Activated CD8-positive, alpha-beta T cell treated with anti-CD3 and anti-CD28 coated beads, Interleukin-2, amount 10 ng/mL, durations not matched to agents 7 days and 5 days (primary cell): ENCODE measurements at regions of chr1 and their contacts with region 1.

Region 1: DNA sequence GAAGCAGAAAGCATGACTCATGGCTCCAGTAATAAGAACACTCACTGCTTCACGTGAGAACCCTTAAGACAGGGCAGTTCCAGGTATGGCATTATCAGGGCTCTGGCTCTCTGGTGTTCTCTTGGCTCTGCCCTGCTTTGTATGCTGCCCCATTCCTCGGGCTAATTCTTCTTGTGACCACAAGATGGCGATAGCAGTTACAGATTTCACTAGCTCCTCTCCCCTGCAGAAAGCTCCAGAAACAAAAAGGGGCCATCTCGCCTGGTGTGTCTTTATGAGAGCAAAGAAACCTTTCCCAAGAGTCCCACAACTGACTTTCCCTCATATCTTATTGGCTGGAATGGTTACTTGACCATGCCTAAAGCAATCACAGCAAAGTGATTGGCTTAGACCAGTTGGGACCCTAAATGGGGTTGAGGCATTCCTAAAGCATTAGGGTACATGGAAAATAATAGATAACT is 60.1 kb downstream of the F3 start:
- DNase-seq: peak; percentile 48
- ATAC-seq: peak; percentile 88
- H3K4me3 Mint-ChIP-seq: no peak overlapping the region
- H3K27ac Mint-ChIP-seq: no peak overlapping the region
- H3K4me1 Mint-ChIP-seq: no peaks in the 10 kb centered on the region
- H3K27me3 Mint-ChIP-seq: no peaks in the 10 kb centered on the region

Region 2: DNA sequence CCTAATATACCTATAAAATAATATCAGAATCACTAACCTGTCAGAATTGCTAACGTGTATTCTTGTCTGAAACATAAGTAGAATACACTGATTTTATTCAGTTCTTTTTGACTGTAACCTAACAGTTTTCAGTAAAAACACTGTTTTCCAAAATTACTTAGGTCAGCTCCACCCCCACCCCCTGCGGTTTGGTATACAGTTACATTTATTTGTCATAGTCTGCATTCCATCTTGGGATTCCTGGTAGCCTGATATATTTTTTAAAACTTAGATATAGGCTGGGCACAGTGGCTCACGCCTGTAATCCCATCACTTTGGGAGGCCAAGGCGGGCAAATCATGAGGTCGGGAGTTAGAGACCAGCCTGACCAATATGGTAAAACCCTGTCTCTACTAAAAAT is 83.1 kb before region 1 on chr1:
- CTCF ChIA-PET with region 1: no interaction called
- POLR2A ChIA-PET with region 1: no interaction called
- DNase-seq: no peak
- ATAC-seq: no peak
- H3K4me3 Mint-ChIP-seq: no peak overlapping the region
- H3K27ac Mint-ChIP-seq: no peak overlapping the region
- H3K4me1 Mint-ChIP-seq: no peaks in the 10 kb centered on the region
- H3K27me3 Mint-ChIP-seq: peaks cover 15% of the 10 kb centered on the region

Region 3: GRCh38 chr1:94463765-94464330 is 17.7 kb before region 1 on chr1:
- CTCF ChIA-PET with region 1: interaction called, 17 read pairs
- POLR2A ChIA-PET with region 1: no interaction called
- DNase-seq: peak; percentile 25
- ATAC-seq: peak; percentile 44
- H3K4me3 Mint-ChIP-seq: no peak overlapping the region
- H3K27ac Mint-ChIP-seq: no peak overlapping the region
- H3K4me1 Mint-ChIP-seq: no peaks in the 10 kb centered on the region
- H3K27me3 Mint-ChIP-seq: no peaks in the 10 kb centered on the region

Region 4: DNA sequence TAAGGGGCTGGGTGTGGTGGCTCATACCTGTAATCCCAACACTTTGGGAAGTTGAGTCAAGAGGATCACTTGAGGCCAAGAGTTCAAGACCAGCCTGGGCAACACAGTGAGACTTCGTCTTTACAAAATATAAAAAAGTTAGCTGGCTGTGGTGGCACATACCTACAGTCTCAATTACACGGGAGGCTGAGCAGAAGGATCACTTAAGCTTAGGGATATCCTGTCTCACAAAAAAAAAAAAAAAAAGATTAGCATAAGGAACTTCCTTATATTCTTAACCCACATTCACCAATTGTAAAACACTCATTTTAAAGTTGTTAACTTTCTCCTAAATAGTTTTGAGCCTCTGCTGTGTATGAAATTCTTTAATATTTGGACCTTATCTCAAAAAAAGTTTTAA is 10.2 kb before region 1 on chr1:
- CTCF ChIA-PET with region 1: interaction called, 11 read pairs
- POLR2A ChIA-PET with region 1: no interaction called
- DNase-seq: no peak
- ATAC-seq: no peak
- H3K4me3 Mint-ChIP-seq: no peak overlapping the region
- H3K27ac Mint-ChIP-seq: no peak overlapping the region
- H3K4me1 Mint-ChIP-seq: no peaks in the 10 kb centered on the region
- H3K27me3 Mint-ChIP-seq: no peaks in the 10 kb centered on the region

Region 5: GRCh38 chr1:94514095-94514727 is 32.7 kb after region 1 on chr1:
- CTCF ChIA-PET with region 1: interaction called, 10 read pairs
- POLR2A ChIA-PET with region 1: no interaction called
- DNase-seq: peak; percentile 44
- ATAC-seq: no peak
- H3K4me3 Mint-ChIP-seq: no peak overlapping the region
- H3K27ac Mint-ChIP-seq: no peak overlapping the region
- H3K4me1 Mint-ChIP-seq: no peaks in the 10 kb centered on the region
- H3K27me3 Mint-ChIP-seq: no peaks in the 10 kb centered on the region

Region 6: GRCh38 chr1:94541175-94542087 is 59.9 kb after region 1 on chr1 and contains the start of gene F3:
- CTCF ChIA-PET with region 1: interaction called, 10 read pairs
- POLR2A ChIA-PET with region 1: no interaction called
- DNase-seq: peak; percentile 75
- ATAC-seq: peak; percentile 94
- H3K4me3 Mint-ChIP-seq: peak within 1 kb of the TSS; percentile 79
- H3K27ac Mint-ChIP-seq: no peak within 1 kb of the TSS
- H3K4me1 Mint-ChIP-seq: peaks cover 20% of the 10 kb centered on the region
- H3K27me3 Mint-ChIP-seq: peaks cover 54% of the 10 kb centered on the region
- total RNA-seq, gene F3: not detected

Region 7: GRCh38 chr1:94801919-94802546 is 320.5 kb after region 1 on chr1:
- CTCF ChIA-PET with region 1: interaction called, 59 read pairs
- POLR2A ChIA-PET with region 1: interaction called, 3 read pairs
- DNase-seq: no peak
- ATAC-seq: peak; percentile 71
- H3K4me3 Mint-ChIP-seq: peak overlapping the region; percentile 46
- H3K27ac Mint-ChIP-seq: no peak overlapping the region
- H3K4me1 Mint-ChIP-seq: peaks cover 10% of the 10 kb centered on the region
- H3K27me3 Mint-ChIP-seq: peaks cover 2% of the 10 kb centered on the region